ENCODE measurements at regions of chr17 and their contacts with region 1.

Region 1: GRCh38 chr17:17812211-17813057 is 24.4 kb downstream of the SREBF1 start:
- DNase-seq: peak; percentile 88
- CTCF ChIP-seq: peak; percentile 99

Region 2: GRCh38 chr17:17800504-17801021 is 11.9 kb before region 1 on chr17:
- CTCF ChIA-PET with region 1: interaction called, 22 read pairs
- POLR2A ChIA-PET with region 1: no interaction called
- DNase-seq: no peak
- CTCF ChIP-seq: no peak

Region 3: DNA sequence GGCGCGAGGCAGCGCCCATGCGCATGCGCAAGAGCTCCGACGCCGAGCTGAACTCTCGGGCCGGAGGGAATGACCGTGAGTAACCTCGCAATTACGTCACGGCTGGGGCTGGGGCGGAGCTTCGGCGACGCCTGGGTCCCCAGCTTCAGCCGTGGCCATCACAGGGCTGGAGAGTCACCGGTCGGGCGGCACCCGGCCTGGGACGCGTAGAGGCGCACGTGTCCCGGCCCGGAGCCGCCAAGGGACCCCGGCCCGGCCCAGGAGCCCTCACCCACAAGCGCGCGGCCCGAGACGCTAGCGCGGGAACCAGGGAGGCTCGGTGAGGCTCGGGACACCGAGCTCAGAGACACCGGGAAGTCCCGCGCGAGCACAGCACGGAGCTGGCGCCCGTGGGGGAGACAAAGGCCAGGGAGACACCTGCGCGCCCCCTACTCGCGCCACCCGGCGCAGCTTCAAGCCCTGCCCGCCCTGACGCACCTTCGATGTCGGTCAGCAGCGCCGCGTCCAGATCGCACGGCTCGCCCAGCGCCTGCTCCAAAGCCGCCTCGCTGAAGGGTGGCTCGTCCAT is 23.9 kb after region 1 on chr17:
- CTCF ChIA-PET with region 1: interaction called, 22 read pairs
- POLR2A ChIA-PET with region 1: interaction called, 5 read pairs
- DNase-seq: peak; percentile 96
- CTCF ChIP-seq: no peak

Region 4: GRCh38 chr17:17859909-17860765 is 47.7 kb after region 1 on chr17:
- CTCF ChIA-PET with region 1: interaction called, 93 read pairs
- POLR2A ChIA-PET with region 1: no interaction called
- DNase-seq: peak; percentile 86
- CTCF ChIP-seq: peak; percentile 94

Measured in GM10248 (cell line).